Panc1 (cell line): ENCODE measurements at regions of chr20 and their contacts with region 1.

Region 1: DNA sequence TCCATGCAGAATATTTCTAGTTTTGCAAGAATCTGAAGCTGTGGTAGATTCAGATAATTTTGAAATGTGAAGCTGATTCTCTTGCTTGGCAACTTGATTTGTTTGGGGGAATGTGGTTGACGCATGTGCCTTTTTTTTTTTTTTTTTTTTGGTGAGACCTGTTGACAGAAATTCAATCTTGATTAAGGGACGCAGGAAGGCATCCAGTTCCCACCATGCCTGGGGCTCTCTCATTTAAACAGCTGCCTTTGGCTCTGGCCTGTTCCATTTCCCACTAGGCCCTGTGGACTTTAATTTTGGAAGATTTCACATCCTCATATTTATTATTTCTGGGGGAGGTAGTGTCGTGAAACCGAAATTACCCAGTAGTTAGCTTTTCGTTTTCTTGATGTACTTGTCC is 8.6 kb downstream of the TPX2 start:
- DNase-seq: no peak
- ATAC-seq: no peak
- H3K4me3 ChIP-seq: no peak overlapping the region
- H3K27ac ChIP-seq: no peak overlapping the region
- H3K4me1 ChIP-seq: peaks cover 10% of the 10 kb centered on the region
- H3K27me3 ChIP-seq: no peaks in the 10 kb centered on the region
- CTCF ChIP-seq: no peak

Region 2: GRCh38 chr20:31508517-31509244 is 239.0 kb before region 1 on chr20:
- CTCF ChIA-PET with region 1: no interaction called
- POLR2A ChIA-PET with region 1: interaction called, 10 read pairs
- in situ Hi-C with region 1: no loop called
- intact Hi-C with region 1: no loop called
- DNase-seq: no peak
- ATAC-seq: no peak
- H3K4me3 ChIP-seq: no peak overlapping the region
- H3K27ac ChIP-seq: no peak overlapping the region
- H3K4me1 ChIP-seq: no peaks in the 10 kb centered on the region
- H3K27me3 ChIP-seq: no peaks in the 10 kb centered on the region
- CTCF ChIP-seq: no peak

Region 3: DNA sequence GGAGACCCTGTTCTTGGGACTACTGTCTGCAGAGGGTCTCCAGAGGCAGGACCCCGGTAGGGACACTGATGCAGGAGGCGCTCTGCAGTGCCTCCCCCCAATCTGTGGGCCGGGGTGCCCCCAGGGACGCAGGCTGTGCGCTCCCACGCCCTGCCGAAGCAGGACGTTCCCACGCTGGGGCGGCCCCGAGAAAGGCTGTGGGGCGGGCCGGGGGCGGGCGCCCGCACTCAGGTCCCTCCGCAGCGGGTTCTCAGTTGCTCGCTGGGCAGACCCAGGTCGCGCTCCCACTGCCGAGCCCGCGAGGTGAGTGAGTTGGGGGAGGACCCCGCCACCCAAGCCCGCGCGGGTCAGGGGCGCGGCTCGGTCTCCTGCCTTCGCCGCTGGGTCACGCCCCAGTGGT is 110.0 kb before region 1 on chr20 and contains the start of gene COX4I2:
- CTCF ChIA-PET with region 1: no interaction called
- POLR2A ChIA-PET with region 1: no interaction called
- in situ Hi-C with region 1: no loop called
- intact Hi-C with region 1: no loop called
- DNase-seq: no peak
- ATAC-seq: no peak
- H3K4me3 ChIP-seq: no peak within 1 kb of the TSS
- H3K27ac ChIP-seq: no peak within 1 kb of the TSS
- H3K4me1 ChIP-seq: no peaks in the 10 kb centered on the region
- H3K27me3 ChIP-seq: no peaks in the 10 kb centered on the region
- CTCF ChIP-seq: no peak
- total RNA-seq, gene COX4I2: not detected

Region 4: GRCh38 chr20:31764641-31765305 is 17.1 kb after region 1 on chr20:
- CTCF ChIA-PET with region 1: interaction called, 10 read pairs
- POLR2A ChIA-PET with region 1: interaction called, 3 read pairs
- in situ Hi-C with region 1: no loop called
- intact Hi-C with region 1: no loop called
- DNase-seq: no peak
- ATAC-seq: no peak
- H3K4me3 ChIP-seq: no peak overlapping the region
- H3K27ac ChIP-seq: no peak overlapping the region
- H3K4me1 ChIP-seq: no peaks in the 10 kb centered on the region
- H3K27me3 ChIP-seq: no peaks in the 10 kb centered on the region
- CTCF ChIP-seq: no peak

Region 5: GRCh38 chr20:31788578-31788977 is 40.9 kb after region 1 on chr20:
- CTCF ChIA-PET with region 1: no interaction called
- POLR2A ChIA-PET with region 1: interaction called, 16 read pairs
- in situ Hi-C with region 1: no loop called
- intact Hi-C with region 1: no loop called
- DNase-seq: no peak
- ATAC-seq: peak; percentile 72
- H3K4me3 ChIP-seq: no peak overlapping the region
- H3K27ac ChIP-seq: no peak overlapping the region
- H3K4me1 ChIP-seq: no peaks in the 10 kb centered on the region
- H3K27me3 ChIP-seq: no peaks in the 10 kb centered on the region
- CTCF ChIP-seq: peak; percentile 64

Region 6: GRCh38 chr20:31890646-31891045 is 143.0 kb after region 1 on chr20:
- CTCF ChIA-PET with region 1: no interaction called
- POLR2A ChIA-PET with region 1: no interaction called
- in situ Hi-C with region 1: no loop called
- intact Hi-C with region 1: no loop called
- DNase-seq: no peak
- ATAC-seq: no peak
- H3K4me3 ChIP-seq: no peak overlapping the region
- H3K27ac ChIP-seq: no peak overlapping the region
- H3K4me1 ChIP-seq: no peaks in the 10 kb centered on the region
- H3K27me3 ChIP-seq: no peaks in the 10 kb centered on the region
- CTCF ChIP-seq: no peak

Region 7: GRCh38 chr20:31968291-31969126 is 220.9 kb after region 1 on chr20:
- CTCF ChIA-PET with region 1: no interaction called
- POLR2A ChIA-PET with region 1: no interaction called
- in situ Hi-C with region 1: no loop called
- intact Hi-C with region 1: no loop called
- DNase-seq: no peak
- ATAC-seq: peak; percentile 62
- H3K4me3 ChIP-seq: peak overlapping the region; percentile 43 to 45
- H3K27ac ChIP-seq: peak overlapping the region; percentile 93
- H3K4me1 ChIP-seq: peaks cover 56% of the 10 kb centered on the region
- H3K27me3 ChIP-seq: peaks cover 9% of the 10 kb centered on the region
- CTCF ChIP-seq: no peak